Vagina (tissue), 2 donors: ENCODE measurements at regions of chr9 and their contacts with region 1.

Region 1: GRCh38 chr9:69759421-69760277 is at the start of gene PTAR1:
- DNase-seq: peak in 1 of 2 donors; percentile 89
- H3K4me3 ChIP-seq: peak within 1 kb of the TSS; percentile 79 to 98
- H3K27ac ChIP-seq: peak within 1 kb of the TSS; percentile 96
- H3K4me1 ChIP-seq: peaks cover 39% of the 10 kb centered on the region
- H3K27me3 ChIP-seq: no peaks in the 10 kb centered on the region
- CTCF ChIP-seq: no peak
- POLR2A ChIP-seq: peak in 1 of 2 donors; percentile 59
- total RNA-seq, gene PTAR1: 56.5 TPM

Region 2: DNA sequence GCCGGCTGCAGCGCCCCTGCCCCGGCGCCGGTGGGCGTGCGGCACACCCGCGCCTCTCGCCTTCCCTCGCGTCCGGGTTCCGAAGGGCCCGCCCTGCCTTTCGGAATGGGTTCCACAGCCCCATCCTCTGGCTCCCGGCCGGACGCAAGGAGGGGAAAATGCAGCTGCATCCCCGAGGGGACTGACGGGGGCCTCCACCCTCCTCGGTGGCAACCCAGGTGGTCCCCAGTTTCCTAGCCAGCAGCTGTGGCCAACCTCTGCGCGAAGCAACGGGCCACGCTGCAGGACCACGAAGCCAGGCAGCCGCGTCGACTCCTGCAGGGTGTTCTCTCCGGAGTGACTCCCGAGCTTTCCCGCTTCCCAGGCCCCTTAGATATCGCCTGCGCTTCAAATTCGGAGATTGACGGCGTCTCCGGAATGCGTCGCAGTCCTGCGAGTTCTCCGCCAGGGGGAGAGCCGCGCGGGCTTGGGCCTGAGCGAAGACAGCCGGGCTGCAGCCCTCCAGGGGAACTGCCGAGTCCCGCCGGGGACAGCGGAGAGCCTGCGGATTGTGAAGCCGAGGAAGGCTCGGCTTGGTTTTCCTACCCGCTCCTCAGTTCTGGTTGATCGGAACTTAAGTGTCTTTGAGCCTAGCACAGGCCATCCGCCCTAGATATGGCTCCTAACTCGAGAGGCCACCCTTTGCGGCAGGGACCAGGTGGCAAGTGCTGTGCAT is 86.9 kb before region 1 on chr9:
- intact Hi-C with region 1: loop called (anchors 5 kb)
- DNase-seq: no peak
- H3K4me3 ChIP-seq: peak overlapping the region; percentile 84 to 85
- H3K27ac ChIP-seq: peak overlapping the region; percentile 85
- H3K4me1 ChIP-seq: peaks cover 36% of the 10 kb centered on the region
- H3K27me3 ChIP-seq: no peaks in the 10 kb centered on the region
- CTCF ChIP-seq: peak; percentile 45 to 84 (median 81)
- POLR2A ChIP-seq: no peak

Region 3: DNA sequence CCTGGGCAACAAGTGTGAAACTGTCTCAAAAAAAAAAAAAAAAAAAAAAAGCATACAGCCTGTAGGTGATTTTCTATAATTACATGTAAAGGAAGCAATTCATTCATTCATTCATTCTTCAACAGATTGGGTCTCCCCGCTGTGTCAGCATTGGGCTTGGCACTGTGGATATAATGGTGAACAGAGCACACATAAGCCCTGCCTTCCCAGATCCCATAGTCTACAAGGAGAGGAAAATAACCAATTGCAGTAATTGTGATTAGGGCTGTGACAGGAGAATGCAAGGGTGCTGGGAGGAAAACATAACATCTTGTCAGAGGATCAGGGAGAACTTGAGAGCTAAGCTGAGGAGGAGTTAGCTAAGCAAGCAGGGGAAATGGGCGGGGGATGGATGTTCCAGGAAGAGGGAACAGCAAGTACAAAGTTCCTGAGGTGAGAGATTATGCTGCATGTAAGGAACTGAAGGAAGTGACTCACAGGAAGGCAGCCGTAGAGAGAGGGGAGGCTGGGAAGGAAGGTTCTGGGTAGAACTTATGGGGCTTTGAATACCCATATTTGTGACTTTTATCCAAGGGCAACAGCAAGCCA is 678.8 kb after region 1 on chr9:
- intact Hi-C with region 1: no loop called
- DNase-seq: no peak
- H3K4me3 ChIP-seq: no peak overlapping the region
- H3K27ac ChIP-seq: peak overlapping the region; percentile 53
- H3K4me1 ChIP-seq: peaks cover 26% of the 10 kb centered on the region
- H3K27me3 ChIP-seq: no peaks in the 10 kb centered on the region
- CTCF ChIP-seq: no peak
- POLR2A ChIP-seq: no peak